ENCODE measurements at regions of chr12 and their contacts with region 1.

Region 1: GRCh38 chr12:120388691-120389481 is 19.9 kb upstream of the MSI1 start:
- DNase-seq: peak; percentile 71 to 88
- H3K4me3 ChIP-seq: peak overlapping the region; percentile 7 to 42 (median 19); a peak in 5 of 8 replicates
- H3K27ac ChIP-seq: peak overlapping the region; percentile 53; the same call in 1 of the 2 replicates
- H3K4me1 ChIP-seq: peaks cover under 1 to 21% (median 9%) of the 10 kb centered on the region in 4 experiments
- H3K27me3 ChIP-seq: no peaks in the 10 kb centered on the region
- CTCF ChIP-seq: no peak
- EP300 ChIP-seq: peak in 1 of 2 experiments; percentile 43; a peak in 1 of 3 replicates
- POLR2A ChIP-seq: peak in 1 of 2 experiments; percentile 50; a peak in 2 of 3 replicates
- RAD21 ChIP-seq: no peak

Region 2: DNA sequence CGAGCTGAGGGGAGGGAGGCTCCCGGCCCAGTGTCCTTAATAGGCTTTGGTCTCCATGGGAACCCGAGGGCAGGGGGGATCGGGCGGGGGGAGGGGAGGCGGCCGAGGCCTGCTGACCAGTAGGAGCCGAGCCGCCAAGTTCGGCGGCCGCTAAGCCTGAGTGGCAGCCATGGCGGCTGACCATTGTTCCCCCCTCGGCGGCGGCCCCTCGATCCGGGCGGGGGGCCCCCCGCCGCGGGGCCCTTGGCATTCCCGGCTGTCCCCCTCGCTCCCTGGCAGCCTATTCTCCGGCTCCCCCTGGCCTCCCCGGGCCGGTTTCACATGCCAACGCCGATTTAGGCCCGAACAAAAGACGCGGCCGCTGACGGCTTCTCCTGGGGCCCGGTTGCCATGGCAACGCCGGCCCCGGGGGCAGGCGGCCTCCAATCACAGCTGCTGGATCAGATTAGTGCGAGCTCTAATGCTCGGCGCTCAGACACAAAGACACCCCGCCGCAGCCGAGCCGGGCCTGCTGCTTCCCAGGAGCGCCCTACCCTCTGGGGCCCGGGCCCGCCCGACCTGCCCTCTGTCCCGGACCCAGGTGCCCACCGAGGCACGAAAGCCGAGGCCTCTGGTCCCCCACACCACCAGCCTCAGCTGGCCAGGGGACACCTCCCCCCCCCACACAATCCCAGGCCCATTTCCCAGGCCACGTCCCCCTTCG is 27.2 kb before region 1 on chr12:
- CTCF ChIA-PET with region 1: interaction called, 26 read pairs
- POLR2A ChIA-PET with region 1: interaction called, 16 read pairs
- DNase-seq: peak; percentile 91 to 93
- H3K4me3 ChIP-seq: peak overlapping the region in 3 of 4 experiments; percentile 33 to 53 (median 43); a peak in 5 of 8 replicates
- H3K27ac ChIP-seq: peak overlapping the region; percentile 79
- H3K4me1 ChIP-seq: peaks cover 18 to 36% (median 28%) of the 10 kb centered on the region in 4 experiments
- H3K27me3 ChIP-seq: no peaks in the 10 kb centered on the region
- CTCF ChIP-seq: no peak
- EP300 ChIP-seq: peak in 1 of 2 experiments; percentile 57; a peak in 1 of 3 replicates
- POLR2A ChIP-seq: peak in 1 of 2 experiments; percentile 44; a peak in 1 of 3 replicates
- RAD21 ChIP-seq: peak in 1 of 2 experiments; percentile 1; a peak in 2 of 4 replicates

Region 3: DNA sequence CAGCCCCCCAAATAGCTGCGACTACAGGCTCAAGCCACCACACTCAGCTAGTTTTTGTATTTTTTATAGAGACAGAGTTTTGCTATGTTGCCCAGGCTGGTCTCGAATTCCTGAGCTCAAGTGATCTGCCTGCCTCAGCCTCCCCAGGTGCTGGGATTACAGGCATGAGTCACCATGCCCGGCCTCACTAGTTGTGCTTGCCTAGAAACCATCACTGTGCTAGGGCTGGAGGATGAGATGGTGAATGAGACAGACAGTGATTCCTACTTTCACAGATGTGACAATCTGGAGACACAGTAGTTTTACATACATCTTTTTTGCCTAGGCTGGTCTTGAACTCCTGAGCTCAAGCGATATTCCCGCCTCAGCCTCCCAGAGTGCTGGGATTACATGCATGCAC is 12.5 kb before region 1 on chr12:
- CTCF ChIA-PET with region 1: interaction called, 11 read pairs
- POLR2A ChIA-PET with region 1: interaction called, 13 read pairs
- DNase-seq: no peak
- H3K4me3 ChIP-seq: no peak overlapping the region
- H3K27ac ChIP-seq: no peak overlapping the region
- H3K4me1 ChIP-seq: peaks cover 0 to 14% (median 8%) of the 10 kb centered on the region in 4 experiments
- H3K27me3 ChIP-seq: peaks cover 0 to 2% (median 1%) of the 10 kb centered on the region in 4 experiments; a peak in 4 of 7 replicates
- CTCF ChIP-seq: no peak
- EP300 ChIP-seq: no peak
- POLR2A ChIP-seq: no peak
- RAD21 ChIP-seq: no peak

Region 4: DNA sequence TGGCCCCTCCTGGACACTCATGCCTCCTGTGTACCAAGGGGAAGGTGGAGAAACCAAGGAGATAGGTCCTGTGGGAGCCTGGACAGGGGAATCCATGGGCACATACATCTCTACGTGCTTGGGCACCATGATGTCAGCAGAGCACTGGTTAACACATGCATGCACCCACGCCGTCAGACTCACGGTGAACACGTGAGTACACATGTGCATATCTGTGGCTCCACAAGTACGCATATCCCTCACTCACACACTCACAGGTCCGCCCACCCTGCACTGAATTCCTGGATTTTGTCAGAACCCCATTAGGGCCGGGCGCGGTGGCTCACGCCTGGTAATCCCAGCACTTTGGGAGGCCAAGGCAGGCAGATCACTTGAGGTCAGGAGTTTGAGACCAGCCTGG is 19.9 kb after region 1 on chr12:
- CTCF ChIA-PET with region 1: interaction called, 8 read pairs
- POLR2A ChIA-PET with region 1: interaction called, 16 read pairs
- DNase-seq: no peak
- H3K4me3 ChIP-seq: no peak overlapping the region
- H3K27ac ChIP-seq: no peak overlapping the region
- H3K4me1 ChIP-seq: peaks cover 0 to 8% (median 2%) of the 10 kb centered on the region in 4 experiments; a peak in 3 of 7 replicates
- H3K27me3 ChIP-seq: no peaks in the 10 kb centered on the region
- CTCF ChIP-seq: no peak
- EP300 ChIP-seq: no peak
- POLR2A ChIP-seq: no peak
- RAD21 ChIP-seq: no peak

Region 5: GRCh38 chr12:120546050-120546386 is 157.1 kb after region 1 on chr12:
- CTCF ChIA-PET with region 1: no interaction called
- POLR2A ChIA-PET with region 1: no interaction called
- DNase-seq: no peak
- H3K4me3 ChIP-seq: no peak overlapping the region
- H3K27ac ChIP-seq: no peak overlapping the region
- H3K4me1 ChIP-seq: no peaks in the 10 kb centered on the region
- H3K27me3 ChIP-seq: no peaks in the 10 kb centered on the region
- CTCF ChIP-seq: no peak
- EP300 ChIP-seq: no peak
- POLR2A ChIP-seq: no peak
- RAD21 ChIP-seq: no peak

Measured in H1 (cell line).